Heart left ventricle (tissue), 16 donors: ENCODE measurements at regions of chr11 and their contacts with region 1.

Region 1: GRCh38 chr11:120121871-120122473 is 15.9 kb downstream of the TRIM29 start:
- DNase-seq: peak in 1 of 5 donors; percentile 32
- ATAC-seq: peak in 3 of 4 donors; percentile 18 to 32 (median 31)
- H3K4me3 ChIP-seq: no peak overlapping the region
- H3K27ac ChIP-seq: no peak overlapping the region
- H3K4me1 ChIP-seq: no peaks in the 10 kb centered on the region
- H3K27me3 ChIP-seq: no peaks in the 10 kb centered on the region
- CTCF ChIP-seq: no peak
- POLR2A ChIP-seq: no peak

Region 2: GRCh38 chr11:119975561-119976152 is 146.3 kb before region 1 on chr11:
- intact Hi-C with region 1: no loop called
- DNase-seq: peak in 1 of 5 donors; percentile 56
- ATAC-seq: peak in 1 of 4 donors; percentile 36
- H3K4me3 ChIP-seq: no peak overlapping the region
- H3K27ac ChIP-seq: no peak overlapping the region
- H3K4me1 ChIP-seq: peaks cover 0 to 15% (median 0%) of the 10 kb centered on the region in 12 donors
- H3K27me3 ChIP-seq: peaks cover 0 to 22% (median 0%) of the 10 kb centered on the region in 9 donors
- CTCF ChIP-seq: no peak
- POLR2A ChIP-seq: no peak

Region 3: DNA sequence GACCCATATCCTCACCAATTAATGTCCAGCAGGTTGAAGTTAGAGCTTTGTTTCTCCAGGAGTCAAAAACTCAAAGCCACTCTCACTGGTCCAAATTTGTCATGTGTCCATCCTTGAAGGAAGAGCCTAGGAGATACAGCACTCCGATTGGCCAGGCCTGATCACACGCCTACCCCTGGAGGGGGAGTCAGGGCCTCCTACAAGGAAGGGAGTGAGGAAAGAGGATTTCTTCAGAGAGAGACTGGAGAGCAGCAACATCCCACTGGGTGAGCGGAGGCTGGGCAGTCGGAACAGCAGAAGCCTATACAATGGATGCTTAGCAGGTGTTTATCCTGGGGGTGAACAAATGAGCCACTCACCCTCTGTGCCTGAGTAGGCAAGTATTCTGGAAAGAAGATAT is 97.9 kb before region 1 on chr11:
- intact Hi-C with region 1: loop called in 1 of 10 experiments (anchors 5 kb)
- DNase-seq: no peak
- ATAC-seq: no peak
- H3K4me3 ChIP-seq: no peak overlapping the region
- H3K27ac ChIP-seq: no peak overlapping the region
- H3K4me1 ChIP-seq: no peaks in the 10 kb centered on the region
- H3K27me3 ChIP-seq: peaks cover 0 to 22% (median 3%) of the 10 kb centered on the region in 9 donors
- CTCF ChIP-seq: no peak
- POLR2A ChIP-seq: no peak